ENCODE measurements at regions of chr4 and their contacts with region 1.

Region 1: GRCh38 chr4:82798168-82799005 is at the start of gene SCD5:
- DNase-seq: peak; percentile 76 to 93 (median 88)
- H3K4me3 ChIP-seq: peak within 1 kb of the TSS; percentile 49 to 94 (median 86)
- H3K27ac ChIP-seq: peak within 1 kb of the TSS; percentile 71 to 97 (median 92)
- H3K27me3 ChIP-seq: no peaks in the 10 kb centered on the region
- CTCF ChIP-seq: peak in 35 of 56 donors; percentile 10 to 57 (median 36)
- total RNA-seq, gene SCD5: 191 to 439 (median 289) TPM

Region 2: GRCh38 chr4:82462415-82462831 is 336.0 kb before region 1 on chr4:
- intact Hi-C with region 1: loop called (anchors 5 to 10 kb)
- DNase-seq: peak; percentile 71 to 97 (median 86)
- H3K4me3 ChIP-seq: peak overlapping the region in 4 of 59 donors; percentile 6 to 21 (median 8)
- H3K27ac ChIP-seq: peak overlapping the region in 36 of 59 donors; percentile 0 to 73 (median 42)
- H3K27me3 ChIP-seq: no peaks in the 10 kb centered on the region
- CTCF ChIP-seq: peak; percentile 73 to 99 (median 95)

Region 3: DNA sequence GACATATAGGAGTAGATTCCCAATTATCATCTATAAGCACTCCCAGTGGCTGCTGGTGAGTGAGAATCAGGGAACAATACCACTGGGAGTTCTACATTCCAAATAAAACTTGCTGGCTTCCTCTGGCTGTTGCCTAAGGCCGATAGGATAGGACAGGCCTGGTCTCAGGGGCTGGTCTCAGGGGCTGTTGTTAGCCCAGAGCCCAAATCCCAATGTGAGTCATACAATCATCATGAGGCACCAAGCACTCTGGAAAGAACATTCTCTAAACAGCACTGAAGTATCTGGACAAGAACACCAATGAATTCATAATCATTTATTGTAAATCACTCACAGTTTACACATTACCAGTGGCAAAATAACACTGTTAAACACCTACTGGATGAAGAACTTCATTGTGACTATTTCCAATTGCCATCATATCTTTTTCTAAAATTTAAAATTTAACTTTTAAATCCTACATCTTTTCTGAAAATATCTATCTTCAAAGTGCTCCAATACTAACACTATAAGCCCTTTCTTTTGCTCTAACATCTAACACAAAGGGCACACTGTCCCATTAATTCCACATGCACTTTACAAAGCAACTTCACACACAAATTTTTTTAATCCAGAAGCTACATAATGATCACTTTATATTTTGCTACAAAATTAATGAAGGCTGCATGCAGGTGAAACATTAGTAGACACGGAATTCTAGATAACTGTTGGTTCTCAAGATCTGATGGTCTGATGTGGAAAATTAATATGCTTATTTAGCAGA is 169.0 kb before region 1 on chr4:
- intact Hi-C with region 1: loop called in 1 of 2 experiments (anchors 10 kb)
- DNase-seq: no peak
- H3K4me3 ChIP-seq: peak overlapping the region in 2 of 59 donors; percentile 8 to 23
- H3K27ac ChIP-seq: peak overlapping the region; percentile 68 to 99 (median 94)
- H3K27me3 ChIP-seq: no peaks in the 10 kb centered on the region
- CTCF ChIP-seq: peak in 1 of 56 donors; percentile 16

Region 4: DNA sequence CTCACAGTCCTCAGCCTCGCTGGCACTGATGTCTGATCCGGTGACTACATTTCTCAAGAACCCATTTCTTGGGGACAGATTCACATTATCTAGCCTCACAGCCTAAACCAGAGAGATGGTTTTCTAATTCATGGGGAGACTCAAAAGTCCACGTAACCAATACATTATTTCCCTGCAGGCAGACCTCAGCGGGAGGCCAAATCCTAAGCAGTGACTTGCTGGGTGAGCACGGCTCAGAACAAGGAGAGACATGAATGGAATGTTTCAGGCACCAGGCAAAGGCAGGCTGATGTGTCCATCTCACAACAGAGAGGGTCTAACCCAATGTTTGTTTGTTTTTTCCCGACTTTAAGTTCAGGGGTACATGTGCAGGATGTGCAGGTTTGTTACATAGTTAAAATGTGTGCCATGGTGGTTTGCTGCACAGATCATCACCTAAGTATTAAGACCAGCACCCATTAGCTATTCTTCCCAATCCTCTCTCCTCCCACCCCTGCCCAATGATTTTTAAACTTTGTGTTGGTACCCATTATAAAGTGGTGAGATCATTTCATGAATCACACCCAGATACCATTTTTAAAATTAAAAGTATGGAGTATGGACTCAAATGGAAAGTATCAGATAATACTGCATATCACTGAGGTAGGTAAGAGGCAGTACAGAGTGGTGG is 53.1 kb before region 1 on chr4:
- intact Hi-C with region 1: loop called (anchors 2 to 10 kb)
- DNase-seq: no peak
- H3K4me3 ChIP-seq: no peak overlapping the region
- H3K27ac ChIP-seq: peak overlapping the region in 56 of 59 donors; percentile 2 to 95 (median 75)
- H3K27me3 ChIP-seq: no peaks in the 10 kb centered on the region
- CTCF ChIP-seq: no peak

Region 5: GRCh38 chr4:83012687-83013419 is 214.5 kb after region 1 on chr4:
- intact Hi-C with region 1: loop called in 1 of 2 experiments (anchors 10 kb)
- DNase-seq: peak; percentile 94 to 100 (median 96)
- H3K4me3 ChIP-seq: peak overlapping the region; percentile 45 to 98 (median 86)
- H3K27ac ChIP-seq: peak overlapping the region; percentile 63 to 98 (median 93)
- H3K27me3 ChIP-seq: no peaks in the 10 kb centered on the region
- CTCF ChIP-seq: peak in 55 of 56 donors; percentile 16 to 74 (median 53)

Region 6: GRCh38 chr4:83691998-83692397 is 893.6 kb after region 1 on chr4:
- intact Hi-C with region 1: no loop called
- DNase-seq: no peak
- H3K4me3 ChIP-seq: no peak overlapping the region
- H3K27ac ChIP-seq: no peak overlapping the region
- H3K27me3 ChIP-seq: peaks cover 0 to 9% (median 0%) of the 10 kb centered on the region in 45 donors
- CTCF ChIP-seq: no peak

Measured in dorsolateral prefrontal cortex (tissue), 120 donors.